CD8-positive, alpha-beta memory T cell (primary cell): ENCODE measurements at regions of chr1 and their contacts with region 1.

Region 1: DNA sequence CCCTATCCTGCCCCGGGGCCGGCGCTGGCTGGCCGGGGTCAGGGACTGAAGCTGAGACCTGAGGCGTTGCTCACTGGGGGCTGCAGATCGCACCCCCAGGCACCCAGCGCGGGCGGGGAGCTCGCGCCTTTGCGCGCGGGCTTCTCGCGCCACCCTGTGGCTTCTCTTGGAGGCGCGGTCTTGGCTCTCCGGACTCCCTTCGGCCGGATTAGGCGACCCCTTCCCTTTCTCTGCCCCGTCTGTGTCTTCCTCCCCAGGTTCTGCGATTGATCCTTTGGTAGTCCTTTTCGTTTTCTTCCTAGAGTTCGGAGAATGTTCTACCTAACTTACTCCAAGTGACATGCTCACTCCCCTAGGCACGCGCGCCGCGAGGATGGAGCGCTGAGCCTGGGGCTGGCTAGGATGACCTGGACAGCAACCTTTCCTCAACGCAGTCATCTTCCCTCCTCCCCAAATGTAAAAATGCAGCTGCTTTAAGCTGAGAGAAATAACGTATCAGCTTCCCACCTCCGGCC is 495 bp upstream of the NTRK1 start:
- DNase-seq: peak; percentile 46 to 71 (median 49)
- H3K4me3 ChIP-seq: peak overlapping the region; percentile 64
- H3K4me3 Mint-ChIP-seq: peak overlapping the region; percentile 74 to 90 (median 81)
- H3K27ac ChIP-seq: no peak overlapping the region
- H3K27ac Mint-ChIP-seq: peak overlapping the region in 4 of 8 donors; percentile 7 to 85 (median 33)
- H3K4me1 ChIP-seq: peaks cover 21% of the 10 kb centered on the region
- H3K4me1 Mint-ChIP-seq: peaks cover 14 to 36% (median 19%) of the 10 kb centered on the region in 3 donors
- H3K27me3 ChIP-seq: peaks cover 40% of the 10 kb centered on the region
- H3K27me3 Mint-ChIP-seq: peaks cover 41 to 61% of the 10 kb centered on the region in 2 donors

Region 2: DNA sequence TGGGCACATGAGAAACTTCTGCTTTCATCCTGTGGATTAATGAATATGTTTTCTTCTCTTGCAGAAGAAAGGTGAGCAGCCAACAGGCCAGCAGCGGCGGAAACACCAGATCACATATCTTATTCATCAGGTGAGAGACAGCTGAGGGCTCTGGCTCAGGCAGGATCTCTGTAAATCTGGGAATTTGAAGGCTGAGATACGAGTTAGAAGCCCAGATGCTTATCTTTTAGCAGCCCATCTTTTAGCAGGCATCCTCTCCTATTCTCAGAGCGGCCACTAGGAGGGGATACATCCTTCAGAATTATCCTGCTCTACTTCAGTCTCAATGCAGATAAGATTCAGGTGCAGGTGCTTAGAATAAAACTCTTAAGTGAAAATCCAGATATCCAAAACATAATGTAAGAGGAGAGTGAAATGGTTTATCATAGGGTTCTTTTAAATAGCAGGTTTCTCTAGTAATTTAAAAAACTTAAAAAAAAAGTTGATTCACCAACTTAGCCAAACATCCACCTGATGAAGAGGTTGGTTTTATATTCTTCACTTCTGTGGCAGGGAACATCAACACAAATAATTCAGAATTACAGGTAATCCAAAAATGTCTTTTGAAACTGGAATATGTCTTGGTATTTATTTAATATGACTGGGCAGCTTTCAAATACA is 62.8 kb before region 1 on chr1:
- CTCF ChIA-PET with region 1: interaction called, 146 read pairs
- POLR2A ChIA-PET with region 1: interaction called, 16 read pairs
- DNase-seq: peak; percentile 35 to 70 (median 56)
- H3K4me3 ChIP-seq: no peak overlapping the region
- H3K4me3 Mint-ChIP-seq: no peak overlapping the region
- H3K27ac ChIP-seq: no peak overlapping the region
- H3K27ac Mint-ChIP-seq: peak overlapping the region in 5 of 8 donors; percentile 21 to 72 (median 52)
- H3K4me1 ChIP-seq: no peaks in the 10 kb centered on the region
- H3K4me1 Mint-ChIP-seq: peaks cover 17 to 28% (median 18%) of the 10 kb centered on the region in 3 donors
- H3K27me3 ChIP-seq: no peaks in the 10 kb centered on the region
- H3K27me3 Mint-ChIP-seq: peaks cover 0 to 5% of the 10 kb centered on the region in 2 donors

Region 3: GRCh38 chr1:156813750-156814570 is 46.2 kb before region 1 on chr1:
- CTCF ChIA-PET with region 1: interaction called, 46 read pairs
- POLR2A ChIA-PET with region 1: interaction called, 15 read pairs
- DNase-seq: peak; percentile 77 to 86 (median 81)
- H3K4me3 ChIP-seq: peak overlapping the region; percentile 68
- H3K4me3 Mint-ChIP-seq: peak overlapping the region; percentile 85 to 98 (median 94)
- H3K27ac ChIP-seq: peak overlapping the region; percentile 97
- H3K27ac Mint-ChIP-seq: peak overlapping the region; percentile 88 to 100 (median 99)
- H3K4me1 ChIP-seq: peaks cover 60% of the 10 kb centered on the region
- H3K4me1 Mint-ChIP-seq: peaks cover 61 to 83% (median 64%) of the 10 kb centered on the region in 3 donors
- H3K27me3 ChIP-seq: no peaks in the 10 kb centered on the region
- H3K27me3 Mint-ChIP-seq: peaks cover 0 to 13% of the 10 kb centered on the region in 2 donors

Region 4: DNA sequence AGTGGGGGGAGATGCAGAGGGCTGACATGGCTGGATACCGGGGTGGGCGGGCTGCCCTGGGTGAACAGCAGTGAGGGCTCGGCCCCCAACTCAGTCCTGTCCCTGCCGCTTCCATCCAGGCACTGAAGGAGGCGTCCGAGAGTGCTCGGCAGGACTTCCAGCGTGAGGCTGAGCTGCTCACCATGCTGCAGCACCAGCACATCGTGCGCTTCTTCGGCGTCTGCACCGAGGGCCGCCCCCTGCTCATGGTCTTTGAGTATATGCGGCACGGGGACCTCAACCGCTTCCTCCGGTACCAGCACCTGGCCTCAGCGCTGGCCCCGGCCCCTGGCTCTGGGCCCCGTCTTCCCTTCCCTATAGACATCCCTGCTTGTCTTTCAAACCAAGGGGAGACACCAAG is 16.1 kb after region 1 on chr1:
- CTCF ChIA-PET with region 1: interaction called, 10 read pairs
- POLR2A ChIA-PET with region 1: no interaction called
- DNase-seq: no peak
- H3K4me3 ChIP-seq: no peak overlapping the region
- H3K4me3 Mint-ChIP-seq: no peak overlapping the region
- H3K27ac ChIP-seq: no peak overlapping the region
- H3K27ac Mint-ChIP-seq: no peak overlapping the region
- H3K4me1 ChIP-seq: no peaks in the 10 kb centered on the region
- H3K4me1 Mint-ChIP-seq: no peaks in the 10 kb centered on the region
- H3K27me3 ChIP-seq: no peaks in the 10 kb centered on the region
- H3K27me3 Mint-ChIP-seq: peaks cover 10 to 47% of the 10 kb centered on the region in 2 donors

Region 5: GRCh38 chr1:156903328-156904091 is 43.3 kb after region 1 on chr1:
- CTCF ChIA-PET with region 1: no interaction called
- POLR2A ChIA-PET with region 1: no interaction called
- DNase-seq: no peak
- H3K4me3 ChIP-seq: no peak overlapping the region
- H3K4me3 Mint-ChIP-seq: no peak overlapping the region
- H3K27ac ChIP-seq: no peak overlapping the region
- H3K27ac Mint-ChIP-seq: no peak overlapping the region
- H3K4me1 ChIP-seq: peaks cover under 1% of the 10 kb centered on the region
- H3K4me1 Mint-ChIP-seq: peaks cover 0 to 2% (median 0%) of the 10 kb centered on the region in 3 donors
- H3K27me3 ChIP-seq: no peaks in the 10 kb centered on the region
- H3K27me3 Mint-ChIP-seq: peaks cover 17 to 41% of the 10 kb centered on the region in 2 donors